Heart left ventricle (tissue), 16 donors: ENCODE measurements at regions of chr10 and their contacts with region 1.

Region 1: GRCh38 chr10:75904499-75905283 is 473.3 kb downstream of the LRMDA start:
- DNase-seq: no peak
- ATAC-seq: peak in 1 of 4 donors; percentile 41
- H3K4me3 ChIP-seq: peak overlapping the region in 5 of 12 donors; percentile 9 to 36 (median 13)
- H3K27ac ChIP-seq: no peak overlapping the region
- H3K4me1 ChIP-seq: peaks cover 0 to 6% (median 0%) of the 10 kb centered on the region in 12 donors
- H3K27me3 ChIP-seq: no peaks in the 10 kb centered on the region
- CTCF ChIP-seq: no peak
- POLR2A ChIP-seq: no peak

Region 2: GRCh38 chr10:75865413-75866299 is 39.0 kb before region 1 on chr10:
- intact Hi-C with region 1: loop called in 1 of 10 experiments (anchors 1 kb)
- DNase-seq: no peak
- ATAC-seq: no peak
- H3K4me3 ChIP-seq: no peak overlapping the region
- H3K27ac ChIP-seq: no peak overlapping the region
- H3K4me1 ChIP-seq: no peaks in the 10 kb centered on the region
- H3K27me3 ChIP-seq: no peaks in the 10 kb centered on the region
- CTCF ChIP-seq: no peak
- POLR2A ChIP-seq: no peak